ENCODE measurements at regions of chr14 and their contacts with region 1.

Region 1: GRCh38 chr14:36070031-36070719 is 106.3 kb downstream of the PTCSC3 start:
- DNase-seq: peak; percentile 25 to 61 (median 32)
- ATAC-seq: peak; percentile 94
- H3K4me3 ChIP-seq: no peak overlapping the region
- H3K27ac ChIP-seq: no peak overlapping the region
- H3K4me1 ChIP-seq: no peaks in the 10 kb centered on the region
- H3K27me3 ChIP-seq: no peaks in the 10 kb centered on the region
- CTCF ChIP-seq: peak; percentile 68 to 77 (median 74)
- EP300 ChIP-seq: no peak
- POLR2A ChIP-seq: no peak
- RAD21 ChIP-seq: peak; percentile 56 to 75

Region 2: DNA sequence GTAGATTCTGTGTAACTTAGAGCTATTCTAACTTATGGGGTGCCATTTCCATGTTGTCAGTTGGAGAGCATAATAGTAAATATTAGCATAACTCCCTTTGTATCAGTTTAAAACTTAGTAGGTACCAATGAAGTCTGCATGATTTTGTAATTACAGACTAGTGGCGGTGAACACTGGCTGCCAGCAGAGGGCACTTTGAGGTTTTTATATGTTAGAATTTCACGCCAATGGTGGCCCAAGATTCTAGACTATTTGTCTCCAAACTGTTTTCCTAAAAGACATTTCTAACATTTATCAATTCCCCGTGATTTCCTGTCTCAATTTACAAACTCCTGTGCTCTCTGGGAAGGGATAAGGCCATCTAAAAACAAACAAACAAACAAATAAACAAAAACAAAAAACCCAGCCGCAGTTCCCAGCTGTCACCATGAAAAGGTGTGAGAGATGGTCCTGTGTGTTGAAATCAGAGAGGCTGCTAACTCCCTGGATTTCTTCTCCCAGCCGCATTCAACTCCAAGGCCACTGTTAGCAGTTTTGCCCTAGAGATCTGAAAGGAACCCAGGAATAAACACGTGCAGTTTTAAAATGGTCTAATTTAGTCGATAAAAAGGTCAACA is 186.4 kb before region 1 on chr14:
- CTCF ChIA-PET with region 1: interaction called, 7 read pairs
- POLR2A ChIA-PET with region 1: no interaction called
- in situ Hi-C with region 1: no loop called
- intact Hi-C with region 1: loop called (anchors 2 kb)
- DNase-seq: peak in 2 of 4 experiments; percentile 6 to 34
- ATAC-seq: peak; percentile 67; the same call in 2 of the 3 replicates
- H3K4me3 ChIP-seq: no peak overlapping the region
- H3K27ac ChIP-seq: no peak overlapping the region
- H3K4me1 ChIP-seq: peaks cover 0 to 4% of the 10 kb centered on the region in 2 experiments; a peak in 2 of 5 replicates
- H3K27me3 ChIP-seq: no peaks in the 10 kb centered on the region
- CTCF ChIP-seq: peak; percentile 57 to 68 (median 60)
- EP300 ChIP-seq: no peak
- POLR2A ChIP-seq: no peak
- RAD21 ChIP-seq: peak; percentile 17 to 53; a peak in 3 of 4 replicates

Region 3: GRCh38 chr14:36373982-36374673 is 304.0 kb after region 1 on chr14:
- CTCF ChIA-PET with region 1: interaction called, 3 read pairs
- POLR2A ChIA-PET with region 1: no interaction called
- in situ Hi-C with region 1: no loop called
- intact Hi-C with region 1: loop called (anchors 5 kb)
- DNase-seq: peak; percentile 68 to 85 (median 70)
- ATAC-seq: peak; percentile 98
- H3K4me3 ChIP-seq: no peak overlapping the region
- H3K27ac ChIP-seq: no peak overlapping the region
- H3K4me1 ChIP-seq: no peaks in the 10 kb centered on the region; a peak in 1 of 5 replicates
- H3K27me3 ChIP-seq: no peaks in the 10 kb centered on the region
- CTCF ChIP-seq: peak; percentile 74 to 86 (median 80)
- EP300 ChIP-seq: no peak
- POLR2A ChIP-seq: no peak
- RAD21 ChIP-seq: peak; percentile 62 to 88

Region 4: GRCh38 chr14:36604757-36605505 is 534.8 kb after region 1 on chr14:
- CTCF ChIA-PET with region 1: interaction called, 9 read pairs
- POLR2A ChIA-PET with region 1: no interaction called
- in situ Hi-C with region 1: no loop called
- intact Hi-C with region 1: loop called (anchors 5 kb)
- DNase-seq: peak; percentile 41 to 73 (median 56)
- ATAC-seq: peak; percentile 83
- H3K4me3 ChIP-seq: no peak overlapping the region
- H3K27ac ChIP-seq: no peak overlapping the region
- H3K4me1 ChIP-seq: no peaks in the 10 kb centered on the region
- H3K27me3 ChIP-seq: no peaks in the 10 kb centered on the region; a peak in 2 of 5 replicates
- CTCF ChIP-seq: peak; percentile 63 to 81 (median 67); a peak in 5 of 6 replicates
- EP300 ChIP-seq: no peak
- POLR2A ChIP-seq: no peak
- RAD21 ChIP-seq: peak; percentile 55 to 68